Activated B cell treated with CpG ODN at 0.5 μM for 24 hours (primary cell): ENCODE measurements at regions of chr10 and their contacts with region 1.

Region 1: DNA sequence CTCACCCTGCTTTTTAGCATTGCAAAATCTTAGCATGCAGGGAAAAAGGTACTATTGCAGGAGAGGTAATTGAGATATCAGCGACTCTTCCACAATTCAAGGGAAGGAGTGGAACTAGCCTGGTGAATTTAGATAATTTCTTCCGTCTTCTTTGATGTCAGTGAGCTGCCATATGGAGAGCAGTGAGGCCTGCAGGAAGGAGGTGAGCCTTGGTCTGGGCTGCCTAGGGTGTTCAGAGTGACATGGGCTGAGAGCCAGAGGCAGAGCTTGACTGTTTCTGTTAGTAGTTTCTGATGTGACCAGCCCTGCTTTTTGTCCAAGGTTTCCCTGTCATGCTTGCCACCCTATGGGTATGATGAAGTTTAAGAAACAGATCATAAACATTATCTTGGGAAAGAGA is 28.6 kb downstream of the KAT6B start:
- DNase-seq: no peak
- ATAC-seq: peak; percentile 55
- H3K4me3 Mint-ChIP-seq: peak overlapping the region; percentile 45
- H3K27ac Mint-ChIP-seq: peak overlapping the region; percentile 85
- H3K4me1 Mint-ChIP-seq: peaks cover 46% of the 10 kb centered on the region
- H3K27me3 Mint-ChIP-seq: no peaks in the 10 kb centered on the region
- CTCF ChIP-seq: no peak

Region 2: DNA sequence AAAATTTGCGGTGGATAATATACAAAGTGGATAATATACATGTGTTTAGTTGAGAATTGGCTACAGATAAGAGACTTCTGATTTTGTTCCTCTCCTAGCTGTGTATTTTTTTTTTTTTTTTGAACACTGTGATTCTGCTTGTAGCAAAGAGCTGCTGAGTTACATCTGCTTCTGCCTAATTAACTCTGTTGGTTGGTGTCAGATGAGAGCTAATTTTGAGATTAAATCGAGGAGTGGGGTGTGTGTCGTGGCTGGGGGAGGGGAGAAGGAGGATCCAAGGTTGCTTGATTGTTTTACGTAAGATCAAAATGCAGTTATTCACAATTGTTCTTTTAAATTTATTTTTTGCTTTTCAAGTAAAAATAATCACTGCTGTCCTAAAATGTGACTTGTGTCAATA is 17.3 kb before region 1 on chr10:
- CTCF ChIA-PET with region 1: no interaction called
- POLR2A ChIA-PET with region 1: interaction called, 21 read pairs
- intact Hi-C with region 1: no loop called
- DNase-seq: no peak
- ATAC-seq: no peak
- H3K4me3 Mint-ChIP-seq: no peak overlapping the region
- H3K27ac Mint-ChIP-seq: no peak overlapping the region
- H3K4me1 Mint-ChIP-seq: peaks cover 42% of the 10 kb centered on the region
- H3K27me3 Mint-ChIP-seq: no peaks in the 10 kb centered on the region
- CTCF ChIP-seq: no peak

Region 3: DNA sequence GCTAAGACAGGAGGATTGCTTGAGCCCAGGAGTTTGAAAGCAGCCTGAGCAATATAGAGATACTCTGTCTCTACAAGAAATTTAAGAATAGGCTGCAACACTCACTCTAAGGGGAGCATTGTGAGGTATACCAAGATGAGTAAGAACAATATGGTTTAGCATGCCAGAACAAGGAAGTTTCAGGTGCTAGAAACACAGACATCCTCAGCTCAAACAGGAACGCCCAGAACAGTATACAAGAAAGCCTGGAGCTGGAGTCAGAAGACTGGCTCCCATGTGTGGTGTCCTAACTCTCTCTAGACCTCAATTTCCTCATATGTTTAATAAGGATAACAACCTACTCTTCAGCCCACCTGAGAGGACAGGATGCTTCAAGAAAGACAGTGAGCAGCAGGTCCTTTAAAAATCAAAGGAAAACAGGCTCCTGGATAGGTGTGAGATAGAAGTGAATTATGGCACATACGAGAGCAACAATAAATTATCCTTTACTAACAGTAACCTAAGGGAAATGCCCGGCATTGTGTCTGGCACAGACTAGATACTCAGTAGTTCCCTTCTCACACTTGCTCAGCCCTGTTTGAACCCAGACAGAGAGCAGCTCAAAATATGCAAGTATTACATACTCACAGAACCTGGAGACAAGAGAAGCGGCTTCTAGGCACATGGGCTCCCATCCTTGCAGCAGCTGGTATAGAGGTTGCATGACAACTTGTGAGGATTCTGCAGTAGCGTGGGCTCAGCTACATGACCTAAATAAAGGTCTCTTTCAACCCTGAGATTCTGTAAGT is 16.8 kb after region 1 on chr10:
- CTCF ChIA-PET with region 1: no interaction called
- POLR2A ChIA-PET with region 1: interaction called, 4 read pairs
- intact Hi-C with region 1: loop called (anchors 2 kb)
- DNase-seq: no peak
- ATAC-seq: peak; percentile 74
- H3K4me3 Mint-ChIP-seq: no peak overlapping the region
- H3K27ac Mint-ChIP-seq: no peak overlapping the region
- H3K4me1 Mint-ChIP-seq: peaks cover 55% of the 10 kb centered on the region
- H3K27me3 Mint-ChIP-seq: no peaks in the 10 kb centered on the region
- CTCF ChIP-seq: no peak

Region 4: DNA sequence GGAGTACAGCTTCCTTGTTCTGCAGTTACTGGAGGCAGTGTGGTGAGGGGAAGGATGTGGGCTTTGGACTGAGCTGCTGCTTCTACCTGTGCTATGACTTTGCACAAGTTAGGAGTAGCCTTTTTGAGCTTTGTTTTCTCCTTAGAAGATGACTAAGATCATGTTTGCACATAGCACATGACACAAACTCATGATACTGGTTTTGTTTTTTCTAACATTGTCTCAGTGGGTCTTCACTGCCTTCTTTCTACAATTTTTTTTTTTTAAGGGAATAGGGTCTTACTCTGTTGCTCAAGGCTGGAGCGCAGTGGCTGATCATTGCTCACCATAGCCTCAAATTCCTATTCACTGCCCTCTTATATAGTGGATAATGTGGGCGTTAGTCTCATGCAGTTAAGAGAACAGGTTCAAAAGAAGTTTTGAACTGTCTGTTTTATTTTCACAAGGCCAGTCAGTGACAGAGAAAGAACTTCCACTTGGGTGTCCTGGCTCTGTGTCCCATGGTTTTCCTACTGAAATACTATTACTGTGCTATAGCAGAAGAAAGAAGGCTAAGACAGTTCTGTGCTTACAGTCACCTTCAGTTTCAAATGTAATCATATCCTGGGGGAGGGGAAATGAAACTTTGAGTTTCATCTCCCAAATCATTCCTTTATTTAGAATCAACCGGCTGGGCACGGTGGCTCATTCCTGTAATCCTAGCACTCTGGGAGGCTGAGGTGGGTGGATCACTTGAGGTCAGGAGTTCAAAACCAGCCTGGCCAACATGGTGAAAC is 43.4 kb after region 1 on chr10:
- CTCF ChIA-PET with region 1: no interaction called
- POLR2A ChIA-PET with region 1: interaction called, 5 read pairs
- intact Hi-C with region 1: loop called (anchors 10 kb)
- DNase-seq: no peak
- ATAC-seq: no peak
- H3K4me3 Mint-ChIP-seq: peak overlapping the region; percentile 19
- H3K27ac Mint-ChIP-seq: no peak overlapping the region
- H3K4me1 Mint-ChIP-seq: peaks cover 60% of the 10 kb centered on the region
- H3K27me3 Mint-ChIP-seq: no peaks in the 10 kb centered on the region
- CTCF ChIP-seq: no peak